ENCODE measurements at regions of chr6 and their contacts with region 1.

Region 1: GRCh38 chr6:73747289-73747688 is 51.3 kb downstream of the CD109 start:
- DNase-seq: no peak
- H3K4me3 Mint-ChIP-seq: no peak overlapping the region
- H3K27ac Mint-ChIP-seq: no peak overlapping the region
- H3K4me1 Mint-ChIP-seq: peaks cover 5% of the 10 kb centered on the region
- H3K27me3 Mint-ChIP-seq: no peaks in the 10 kb centered on the region

Region 2: DNA sequence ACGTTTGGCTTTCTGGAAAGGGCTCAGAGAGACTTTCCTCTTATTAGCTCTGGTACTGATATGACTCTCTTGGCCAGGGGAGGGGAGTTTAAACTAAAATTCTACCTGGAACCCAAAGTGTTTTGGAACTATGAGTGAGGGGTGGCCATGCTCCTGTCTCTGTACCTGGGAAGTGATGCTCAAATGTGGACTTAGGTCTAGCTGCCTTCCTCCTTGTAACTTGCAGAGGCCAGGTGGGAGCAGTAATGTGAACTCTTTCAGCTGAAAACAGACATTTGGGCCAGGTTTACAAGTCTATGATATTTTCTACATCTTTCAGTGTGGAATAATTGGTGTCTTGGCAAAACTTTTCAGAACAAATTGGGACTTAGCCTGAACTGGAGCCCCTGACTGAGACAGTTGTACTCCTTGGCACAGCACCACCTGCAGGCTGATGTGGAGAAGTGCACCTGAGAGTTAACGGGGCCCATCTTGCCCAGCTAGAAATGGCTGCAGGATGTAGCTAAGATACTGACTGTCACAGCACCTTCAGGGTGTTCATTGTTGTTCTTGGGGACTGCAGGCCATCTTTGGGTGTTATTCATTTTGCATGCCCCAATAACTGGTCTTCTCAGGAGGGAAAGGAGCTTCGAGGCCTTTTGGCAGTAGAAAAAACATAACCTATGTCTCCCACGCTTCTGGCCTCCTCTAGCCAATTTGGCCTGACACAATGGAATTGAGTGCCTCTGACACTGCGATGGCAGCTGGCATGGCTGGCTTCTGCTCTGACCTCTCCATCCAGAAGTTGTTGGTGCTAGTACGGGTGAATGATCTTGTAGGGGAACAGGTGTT is 14.2 kb before region 1 on chr6:
- intact Hi-C with region 1: loop called (anchors 1 kb)
- DNase-seq: peak; percentile 61
- H3K4me3 Mint-ChIP-seq: no peak overlapping the region
- H3K27ac Mint-ChIP-seq: peak overlapping the region; percentile 34
- H3K4me1 Mint-ChIP-seq: peaks cover 46% of the 10 kb centered on the region
- H3K27me3 Mint-ChIP-seq: no peaks in the 10 kb centered on the region

Region 3: GRCh38 chr6:73782911-73783310 is 35.6 kb after region 1 on chr6:
- intact Hi-C with region 1: loop called (anchors 5 kb)
- DNase-seq: no peak
- H3K4me3 Mint-ChIP-seq: no peak overlapping the region
- H3K27ac Mint-ChIP-seq: no peak overlapping the region
- H3K4me1 Mint-ChIP-seq: no peaks in the 10 kb centered on the region
- H3K27me3 Mint-ChIP-seq: no peaks in the 10 kb centered on the region

Region 4: GRCh38 chr6:73798592-73798991 is 51.3 kb after region 1 on chr6:
- intact Hi-C with region 1: no loop called
- DNase-seq: no peak
- H3K4me3 Mint-ChIP-seq: no peak overlapping the region
- H3K27ac Mint-ChIP-seq: peak overlapping the region; percentile 66
- H3K4me1 Mint-ChIP-seq: peaks cover 22% of the 10 kb centered on the region
- H3K27me3 Mint-ChIP-seq: no peaks in the 10 kb centered on the region

Measured in activated T-helper 1 cell treated with anti-CD3 and anti-CD28 coated beads, Interleukin-12 subunit alpha, Interleukin-12 subunit beta, Interleukin-2, Interleukin-4 antibody, amounts not matched to agents 30 ng/mL and 10 ng/mL and 1 ng/mL, durations not matched to agents 14 hours and 24 hours and 36 hours (primary cell).